ENCODE measurements at regions of chr1 and their contacts with region 1.

Region 1: GRCh38 chr1:174743654-174744561 is 255.8 kb upstream of the CACYBP start:
- DNase-seq: peak; percentile 33
- CTCF ChIP-seq: peak; percentile 51

Region 2: GRCh38 chr1:174074757-174075156 is 669.2 kb before region 1 on chr1:
- in situ Hi-C with region 1: loop called (anchors 25 kb)
- DNase-seq: peak; percentile 34
- CTCF ChIP-seq: no peak

Region 3: DNA sequence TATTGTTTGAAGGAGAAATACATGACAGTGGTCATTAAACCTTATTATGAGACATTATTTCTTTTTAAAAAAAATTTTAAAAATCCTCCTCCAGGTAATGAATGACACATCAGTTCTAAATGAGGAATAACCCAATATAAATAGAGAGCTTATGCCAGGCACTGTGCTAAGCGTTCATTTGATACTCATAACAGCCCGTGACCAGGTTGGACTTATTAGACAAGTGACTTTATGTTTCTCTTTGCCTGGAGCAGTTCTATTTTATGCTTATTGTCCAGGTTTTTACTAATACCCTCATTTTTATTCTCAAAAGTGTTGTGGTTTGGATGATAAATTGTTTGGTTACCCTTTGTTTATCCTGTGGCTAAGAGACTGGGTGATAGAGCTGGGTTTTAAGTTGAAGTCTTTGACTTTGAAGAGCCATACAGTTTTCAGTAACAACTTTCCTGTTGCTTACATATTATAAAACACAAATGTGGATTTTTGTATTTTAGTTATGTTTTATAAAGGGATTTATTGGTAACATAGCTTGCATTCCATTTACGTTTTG is 500.4 kb before region 1 on chr1:
- in situ Hi-C with region 1: no loop called
- DNase-seq: no peak
- CTCF ChIP-seq: no peak

Measured in GM13976 (cell line).